ENCODE measurements at regions of chr10 and their contacts with region 1.

Region 1: DNA sequence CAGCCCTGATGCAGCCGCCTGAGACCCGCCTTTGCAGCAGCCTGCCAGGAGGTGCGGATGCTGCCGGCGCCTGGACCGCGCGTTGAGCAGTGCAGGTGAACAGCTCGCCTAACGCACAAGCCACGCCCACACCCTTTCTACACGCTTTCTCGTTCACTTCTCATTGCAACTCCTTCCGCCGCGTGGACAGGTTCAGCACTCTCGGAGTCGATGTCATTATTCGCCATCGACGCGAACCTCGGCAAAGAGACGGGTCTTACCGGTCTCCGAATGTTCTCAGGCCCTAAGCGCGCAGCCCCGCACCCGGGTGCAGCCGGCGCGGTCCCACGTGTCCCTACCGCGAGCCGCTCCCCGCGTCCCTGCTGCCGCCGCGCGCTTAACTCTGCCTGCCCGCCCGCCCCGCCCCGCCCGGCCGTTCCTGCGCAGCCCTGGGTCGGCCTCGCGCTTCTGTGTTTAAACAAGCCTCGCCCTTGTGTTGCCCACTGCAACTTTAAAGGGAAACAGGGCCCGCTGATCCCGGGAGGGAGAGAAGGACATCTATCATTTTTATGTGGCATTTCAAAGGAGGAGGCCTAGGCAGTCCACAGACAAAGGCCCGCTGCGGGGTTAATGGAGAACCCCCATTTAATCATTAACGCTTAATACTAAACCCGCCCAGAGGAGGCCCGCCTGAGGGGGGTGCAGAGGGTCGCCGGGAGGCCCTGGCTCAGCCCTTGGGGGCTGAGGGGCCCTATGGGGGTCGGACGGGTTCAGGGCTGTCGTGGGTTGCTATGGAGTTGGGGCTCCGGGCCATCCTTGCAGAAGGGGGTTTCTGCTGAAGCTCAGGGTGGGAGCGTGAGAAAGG is 128.5 kb downstream of the WDR11 start:
- DNase-seq: peak; percentile 94 to 97
- H3K4me3 ChIP-seq: peak overlapping the region; percentile 83
- H3K4me3 Mint-ChIP-seq: peak overlapping the region; percentile 82
- H3K27ac Mint-ChIP-seq: peak overlapping the region; percentile 93
- H3K4me1 ChIP-seq: peaks cover 60% of the 10 kb centered on the region
- H3K4me1 Mint-ChIP-seq: peaks cover 57% of the 10 kb centered on the region
- H3K27me3 ChIP-seq: no peaks in the 10 kb centered on the region
- H3K27me3 Mint-ChIP-seq: no peaks in the 10 kb centered on the region
- CTCF ChIP-seq: no peak

Region 2: DNA sequence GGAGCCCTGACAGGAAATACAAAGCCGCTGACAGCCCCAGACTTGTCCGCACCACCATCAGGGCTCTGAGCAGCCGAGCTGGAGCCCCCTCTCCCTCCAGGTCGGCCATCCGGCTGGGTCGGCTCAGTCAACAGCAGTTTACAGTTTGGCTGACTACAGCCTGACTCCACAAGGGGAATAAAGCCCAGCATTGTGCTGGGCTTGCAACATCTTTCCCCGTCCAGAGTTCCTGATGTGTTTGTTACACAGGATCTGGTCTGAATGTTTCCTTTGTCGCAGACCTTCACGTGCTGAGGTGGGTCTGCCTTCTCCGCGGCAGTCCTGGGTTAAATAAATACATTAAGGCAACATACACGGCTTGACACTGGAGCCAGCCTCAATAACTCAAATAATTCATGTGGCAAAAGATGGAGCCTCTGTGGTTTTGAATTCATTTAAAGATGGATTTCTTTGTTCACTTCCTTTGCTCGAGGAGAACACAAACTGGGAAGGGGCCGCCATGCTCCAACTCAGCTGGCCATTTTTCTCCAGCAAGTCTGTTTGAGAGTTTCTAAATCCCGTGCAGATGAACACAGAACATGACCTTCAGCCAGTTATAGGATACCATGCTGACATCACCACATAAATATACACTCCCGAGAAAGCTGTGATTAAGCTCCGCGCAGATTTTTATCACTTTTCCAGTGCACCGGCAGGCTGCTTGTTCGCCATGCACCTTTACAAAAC is 63.6 kb after region 1 on chr10:
- CTCF ChIA-PET with region 1: no interaction called
- POLR2A ChIA-PET with region 1: no interaction called
- intact Hi-C with region 1: no loop called
- DNase-seq: no peak
- H3K4me3 ChIP-seq: no peak overlapping the region
- H3K4me3 Mint-ChIP-seq: no peak overlapping the region
- H3K27ac Mint-ChIP-seq: no peak overlapping the region
- H3K4me1 ChIP-seq: peaks cover 7% of the 10 kb centered on the region; the same call in 1 of the 2 replicates
- H3K4me1 Mint-ChIP-seq: peaks cover 6% of the 10 kb centered on the region
- H3K27me3 ChIP-seq: no peaks in the 10 kb centered on the region
- H3K27me3 Mint-ChIP-seq: no peaks in the 10 kb centered on the region
- CTCF ChIP-seq: no peak

Region 3: DNA sequence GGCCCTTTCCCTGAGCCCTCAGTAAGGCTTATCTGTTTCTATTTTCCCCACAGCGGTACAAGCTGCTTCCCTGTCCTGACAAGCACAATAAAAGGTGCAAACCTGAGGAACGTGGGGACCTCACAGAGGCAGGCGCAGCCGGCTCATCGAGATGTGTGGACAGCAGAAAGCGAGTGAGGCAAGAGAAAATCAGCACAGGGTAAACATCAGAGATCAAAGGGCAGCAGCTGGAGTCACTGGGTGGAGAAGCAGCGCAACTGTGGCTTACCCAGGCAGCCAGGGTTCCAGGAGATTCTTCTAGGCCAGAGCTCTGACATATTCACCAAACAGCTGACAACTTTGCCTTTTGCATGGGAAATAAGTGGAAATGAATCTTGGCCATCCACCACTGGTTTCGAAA is 84.1 kb after region 1 on chr10:
- CTCF ChIA-PET with region 1: interaction called, 5 read pairs
- POLR2A ChIA-PET with region 1: no interaction called
- intact Hi-C with region 1: loop called (anchors 1 kb)
- DNase-seq: peak; percentile 89 to 90
- H3K4me3 ChIP-seq: no peak overlapping the region
- H3K4me3 Mint-ChIP-seq: peak overlapping the region; percentile 41
- H3K27ac Mint-ChIP-seq: peak overlapping the region; percentile 81
- H3K4me1 ChIP-seq: peaks cover 34% of the 10 kb centered on the region
- H3K4me1 Mint-ChIP-seq: peaks cover 31% of the 10 kb centered on the region
- H3K27me3 ChIP-seq: no peaks in the 10 kb centered on the region
- H3K27me3 Mint-ChIP-seq: no peaks in the 10 kb centered on the region
- CTCF ChIP-seq: no peak

Region 4: DNA sequence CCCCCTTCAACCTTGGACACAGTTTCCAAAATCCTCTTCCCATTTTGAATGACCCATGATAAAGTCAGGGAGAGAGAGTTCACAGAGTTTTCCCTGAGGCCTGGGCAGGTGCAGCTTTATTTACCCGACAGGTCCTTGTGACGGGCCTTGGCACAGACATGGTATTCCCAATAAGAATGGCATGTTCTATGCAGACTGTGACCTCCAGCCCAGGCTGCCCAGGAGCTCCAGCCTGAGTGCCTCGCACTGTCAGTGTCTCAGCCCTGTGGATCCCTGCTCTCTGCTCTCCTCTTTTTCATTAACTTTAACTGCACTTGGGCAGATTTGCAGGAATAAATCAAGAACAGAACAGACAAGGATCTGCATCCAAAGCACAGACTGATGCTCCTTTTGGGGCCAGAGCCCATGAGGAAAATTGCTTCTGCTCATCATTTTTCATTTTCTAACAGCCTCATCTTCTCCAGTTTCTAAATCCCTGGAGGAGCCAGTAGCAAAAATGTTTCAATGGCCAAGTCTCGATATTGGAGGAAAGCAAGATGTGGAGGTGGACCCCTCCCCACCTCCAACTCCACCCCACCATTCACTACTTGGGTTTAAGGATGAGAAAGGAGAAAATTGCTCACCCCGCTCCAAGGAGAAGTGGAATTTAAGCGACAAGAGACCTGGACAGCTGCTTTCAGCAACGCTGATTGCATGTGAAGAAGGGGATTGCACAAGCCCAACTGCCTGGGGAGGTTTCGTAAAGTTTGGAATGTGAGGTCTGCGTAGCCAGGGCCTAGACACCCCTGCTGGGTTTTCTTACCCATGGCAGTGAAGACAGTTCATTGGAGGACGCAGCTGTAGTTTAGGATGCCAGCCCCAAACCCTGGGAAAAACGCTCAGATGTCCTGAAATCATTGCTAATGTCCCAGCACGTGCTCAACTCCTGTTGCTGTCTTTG is 97.4 kb after region 1 on chr10:
- CTCF ChIA-PET with region 1: no interaction called
- POLR2A ChIA-PET with region 1: interaction called, 5 read pairs
- intact Hi-C with region 1: loop called (anchors 1 kb)
- DNase-seq: peak; percentile 81
- H3K4me3 ChIP-seq: no peak overlapping the region
- H3K4me3 Mint-ChIP-seq: peak overlapping the region; percentile 43
- H3K27ac Mint-ChIP-seq: peak overlapping the region; percentile 68
- H3K4me1 ChIP-seq: peaks cover 75% of the 10 kb centered on the region
- H3K4me1 Mint-ChIP-seq: peaks cover 58% of the 10 kb centered on the region
- H3K27me3 ChIP-seq: no peaks in the 10 kb centered on the region
- H3K27me3 Mint-ChIP-seq: no peaks in the 10 kb centered on the region
- CTCF ChIP-seq: no peak

Region 5: GRCh38 chr10:121368347-121369025 is 388.8 kb after region 1 on chr10:
- CTCF ChIA-PET with region 1: no interaction called
- POLR2A ChIA-PET with region 1: no interaction called
- intact Hi-C with region 1: loop called (anchors 2 kb)
- DNase-seq: peak; percentile 81 to 83
- H3K4me3 ChIP-seq: peak overlapping the region; percentile 7; the same call in 1 of the 2 replicates
- H3K4me3 Mint-ChIP-seq: peak overlapping the region; percentile 71
- H3K27ac Mint-ChIP-seq: peak overlapping the region; percentile 87
- H3K4me1 ChIP-seq: peaks cover 49% of the 10 kb centered on the region
- H3K4me1 Mint-ChIP-seq: peaks cover 43% of the 10 kb centered on the region
- H3K27me3 ChIP-seq: no peaks in the 10 kb centered on the region
- H3K27me3 Mint-ChIP-seq: no peaks in the 10 kb centered on the region
- CTCF ChIP-seq: peak in 1 of 2 experiments; percentile 22

Region 6: GRCh38 chr10:121510201-121510771 is 530.6 kb after region 1 on chr10:
- CTCF ChIA-PET with region 1: no interaction called
- POLR2A ChIA-PET with region 1: no interaction called
- intact Hi-C with region 1: loop called (anchors 5 kb)
- DNase-seq: no peak
- H3K4me3 ChIP-seq: no peak overlapping the region
- H3K4me3 Mint-ChIP-seq: peak overlapping the region; percentile 24
- H3K27ac Mint-ChIP-seq: peak overlapping the region; percentile 52
- H3K4me1 ChIP-seq: peaks cover 69% of the 10 kb centered on the region
- H3K4me1 Mint-ChIP-seq: peaks cover 51% of the 10 kb centered on the region
- H3K27me3 ChIP-seq: no peaks in the 10 kb centered on the region
- H3K27me3 Mint-ChIP-seq: no peaks in the 10 kb centered on the region
- CTCF ChIP-seq: no peak

Region 7: GRCh38 chr10:121771966-121772365 is 792.3 kb after region 1 on chr10:
- CTCF ChIA-PET with region 1: no interaction called
- POLR2A ChIA-PET with region 1: no interaction called
- intact Hi-C with region 1: loop called (anchors 2 kb)
- DNase-seq: no peak
- H3K4me3 ChIP-seq: no peak overlapping the region
- H3K4me3 Mint-ChIP-seq: peak overlapping the region; percentile 40
- H3K27ac Mint-ChIP-seq: peak overlapping the region; percentile 67
- H3K4me1 ChIP-seq: peaks cover 67% of the 10 kb centered on the region
- H3K4me1 Mint-ChIP-seq: peaks cover 17% of the 10 kb centered on the region
- H3K27me3 ChIP-seq: no peaks in the 10 kb centered on the region
- H3K27me3 Mint-ChIP-seq: no peaks in the 10 kb centered on the region
- CTCF ChIP-seq: no peak

Measured in Caco-2 (cell line).